Calu3 (cell line): ENCODE measurements at regions of chr9 and their contacts with region 1.

Region 1: GRCh38 chr9:76403352-76403751 is 9.1 kb upstream of the RFK start:
- DNase-seq: no peak
- H3K4me3 Mint-ChIP-seq: peak overlapping the region; percentile 30
- H3K27ac Mint-ChIP-seq: no peak overlapping the region
- H3K4me1 Mint-ChIP-seq: peaks cover 28% of the 10 kb centered on the region
- H3K27me3 Mint-ChIP-seq: no peaks in the 10 kb centered on the region
- CTCF ChIP-seq: peak; percentile 27

Region 2: GRCh38 chr9:76441551-76442322 is 38.4 kb after region 1 on chr9:
- CTCF ChIA-PET with region 1: interaction called, 3 read pairs
- intact Hi-C with region 1: loop called (anchors 5 kb)
- DNase-seq: peak; percentile 24
- H3K4me3 Mint-ChIP-seq: peak overlapping the region; percentile 33
- H3K27ac Mint-ChIP-seq: peak overlapping the region; percentile 72
- H3K4me1 Mint-ChIP-seq: peaks cover 17% of the 10 kb centered on the region
- H3K27me3 Mint-ChIP-seq: no peaks in the 10 kb centered on the region
- CTCF ChIP-seq: no peak